ENCODE measurements at regions of chr2 and their contacts with region 1.

Region 1: GRCh38 chr2:203814661-203815540 is 52.7 kb upstream of the CTLA4 start:
- DNase-seq: peak; percentile 63
- H3K4me3 Mint-ChIP-seq: no peak overlapping the region
- H3K27ac Mint-ChIP-seq: no peak overlapping the region
- H3K4me1 Mint-ChIP-seq: peaks cover 53% of the 10 kb centered on the region
- H3K27me3 Mint-ChIP-seq: peaks cover 12% of the 10 kb centered on the region

Region 2: GRCh38 chr2:203225423-203226039 is 589.4 kb before region 1 on chr2:
- CTCF ChIA-PET with region 1: interaction called, 12 read pairs
- DNase-seq: peak; percentile 52
- H3K4me3 Mint-ChIP-seq: no peak overlapping the region
- H3K27ac Mint-ChIP-seq: no peak overlapping the region
- H3K4me1 Mint-ChIP-seq: no peaks in the 10 kb centered on the region
- H3K27me3 Mint-ChIP-seq: no peaks in the 10 kb centered on the region

Region 3: DNA sequence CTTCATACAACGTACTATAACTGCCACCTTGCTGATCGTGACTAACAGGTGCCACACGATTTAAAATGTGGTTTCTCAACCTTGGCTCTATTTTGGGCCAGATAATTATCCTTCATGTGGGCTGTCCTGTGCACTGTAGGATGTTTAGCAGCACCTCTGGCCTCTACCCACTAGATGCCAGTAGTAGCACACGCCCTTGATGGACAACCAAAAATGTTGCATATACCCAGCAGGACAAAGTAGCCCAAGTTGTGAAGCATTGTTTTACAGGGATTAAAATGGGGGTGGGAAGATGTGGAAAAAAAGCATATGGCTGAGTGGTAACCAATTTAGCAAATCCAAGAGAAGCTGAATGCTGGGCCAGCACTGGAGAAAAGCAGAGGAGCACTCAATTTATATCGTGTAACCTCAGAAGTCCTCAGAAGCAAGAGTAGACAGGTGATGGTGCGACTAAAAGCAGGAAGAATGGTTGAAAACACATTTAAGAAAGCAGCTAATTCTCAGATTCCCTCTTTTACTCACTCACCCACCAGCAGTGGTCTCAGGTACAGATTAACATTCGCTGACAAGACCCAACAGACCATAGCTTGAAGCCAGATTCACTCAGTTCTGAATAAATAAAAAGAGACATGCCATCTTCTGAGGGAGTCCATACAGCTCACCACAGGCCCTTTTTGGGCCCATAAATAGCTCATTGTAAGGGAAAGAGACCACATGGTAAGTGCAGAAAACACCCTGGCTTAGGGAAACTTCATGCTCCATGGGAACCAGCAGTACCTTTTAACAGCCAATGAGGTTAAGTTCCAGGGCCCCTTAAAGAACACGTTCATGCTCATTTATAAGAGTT is 330.4 kb before region 1 on chr2:
- CTCF ChIA-PET with region 1: interaction called, 116 read pairs
- DNase-seq: peak; percentile 70
- H3K4me3 Mint-ChIP-seq: no peak overlapping the region
- H3K27ac Mint-ChIP-seq: no peak overlapping the region
- H3K4me1 Mint-ChIP-seq: peaks cover 5% of the 10 kb centered on the region
- H3K27me3 Mint-ChIP-seq: no peaks in the 10 kb centered on the region

Region 4: GRCh38 chr2:203730076-203730729 is 84.7 kb before region 1 on chr2:
- CTCF ChIA-PET with region 1: interaction called, 34 read pairs
- DNase-seq: no peak
- H3K4me3 Mint-ChIP-seq: peak overlapping the region; percentile 22
- H3K27ac Mint-ChIP-seq: peak overlapping the region; percentile 93
- H3K4me1 Mint-ChIP-seq: peaks cover 92% of the 10 kb centered on the region
- H3K27me3 Mint-ChIP-seq: no peaks in the 10 kb centered on the region

Region 5: DNA sequence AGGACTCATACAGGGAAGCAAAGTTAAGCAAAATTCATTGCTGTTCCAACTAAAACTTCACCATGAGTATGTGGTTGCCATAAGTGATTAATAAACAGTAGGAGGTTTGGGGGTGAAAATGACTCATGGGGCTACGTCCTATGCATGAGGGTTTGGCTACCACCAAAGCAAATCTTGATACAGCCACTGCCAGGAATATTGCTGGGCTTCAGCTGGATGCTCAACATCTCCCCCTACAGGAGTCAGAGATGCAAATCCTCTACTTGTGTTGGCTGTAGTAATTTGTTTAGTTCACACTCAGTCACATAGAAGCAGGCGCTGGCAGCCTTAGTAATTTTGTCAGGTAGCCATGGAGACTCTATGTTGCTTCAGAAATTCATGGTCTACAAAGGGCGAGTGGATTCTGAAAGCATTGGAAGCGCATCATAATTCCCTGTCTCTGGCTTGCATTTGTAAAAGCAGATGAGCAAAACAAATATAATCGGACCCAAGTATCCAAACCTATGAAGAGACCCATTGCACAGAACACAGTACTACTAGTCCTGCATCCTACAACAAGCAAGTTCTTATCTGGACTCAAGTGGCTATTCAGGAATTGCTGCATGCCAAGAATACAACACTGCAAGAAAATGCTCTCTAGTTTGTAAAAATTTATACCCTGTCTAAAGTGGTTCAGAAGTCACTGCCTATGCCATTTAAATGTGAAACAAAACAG is 32.5 kb before region 1 on chr2:
- CTCF ChIA-PET with region 1: interaction called, 13 read pairs
- DNase-seq: peak; percentile 69
- H3K4me3 Mint-ChIP-seq: no peak overlapping the region
- H3K27ac Mint-ChIP-seq: no peak overlapping the region
- H3K4me1 Mint-ChIP-seq: peaks cover 47% of the 10 kb centered on the region
- H3K27me3 Mint-ChIP-seq: no peaks in the 10 kb centered on the region

Region 6: GRCh38 chr2:204019572-204020501 is 204.9 kb after region 1 on chr2:
- CTCF ChIA-PET with region 1: no interaction called
- DNase-seq: peak; percentile 40
- H3K4me3 Mint-ChIP-seq: no peak overlapping the region
- H3K27ac Mint-ChIP-seq: peak overlapping the region; percentile 15
- H3K4me1 Mint-ChIP-seq: peaks cover 46% of the 10 kb centered on the region
- H3K27me3 Mint-ChIP-seq: no peaks in the 10 kb centered on the region

Region 7: GRCh38 chr2:204046145-204046544 is 231.2 kb after region 1 on chr2:
- CTCF ChIA-PET with region 1: no interaction called
- DNase-seq: no peak
- H3K4me3 Mint-ChIP-seq: no peak overlapping the region
- H3K27ac Mint-ChIP-seq: no peak overlapping the region
- H3K4me1 Mint-ChIP-seq: peaks cover 21% of the 10 kb centered on the region
- H3K27me3 Mint-ChIP-seq: peaks cover 5% of the 10 kb centered on the region